GM10248 (cell line): ENCODE measurements at regions of chr10 and their contacts with region 1.

Region 1: GRCh38 chr10:110137142-110137545 is 70.3 kb upstream of the MXI1 start:
- DNase-seq: peak; percentile 56
- CTCF ChIP-seq: peak; percentile 56

Region 2: GRCh38 chr10:110163192-110163773 is 26.1 kb after region 1 on chr10:
- CTCF ChIA-PET with region 1: interaction called, 20 read pairs
- POLR2A ChIA-PET with region 1: no interaction called
- DNase-seq: no peak
- CTCF ChIP-seq: no peak

Region 3: GRCh38 chr10:110225756-110226542 is 88.8 kb after region 1 on chr10:
- CTCF ChIA-PET with region 1: interaction called, 15 read pairs
- POLR2A ChIA-PET with region 1: no interaction called
- DNase-seq: peak; percentile 88
- CTCF ChIP-seq: peak; percentile 83

Region 4: DNA sequence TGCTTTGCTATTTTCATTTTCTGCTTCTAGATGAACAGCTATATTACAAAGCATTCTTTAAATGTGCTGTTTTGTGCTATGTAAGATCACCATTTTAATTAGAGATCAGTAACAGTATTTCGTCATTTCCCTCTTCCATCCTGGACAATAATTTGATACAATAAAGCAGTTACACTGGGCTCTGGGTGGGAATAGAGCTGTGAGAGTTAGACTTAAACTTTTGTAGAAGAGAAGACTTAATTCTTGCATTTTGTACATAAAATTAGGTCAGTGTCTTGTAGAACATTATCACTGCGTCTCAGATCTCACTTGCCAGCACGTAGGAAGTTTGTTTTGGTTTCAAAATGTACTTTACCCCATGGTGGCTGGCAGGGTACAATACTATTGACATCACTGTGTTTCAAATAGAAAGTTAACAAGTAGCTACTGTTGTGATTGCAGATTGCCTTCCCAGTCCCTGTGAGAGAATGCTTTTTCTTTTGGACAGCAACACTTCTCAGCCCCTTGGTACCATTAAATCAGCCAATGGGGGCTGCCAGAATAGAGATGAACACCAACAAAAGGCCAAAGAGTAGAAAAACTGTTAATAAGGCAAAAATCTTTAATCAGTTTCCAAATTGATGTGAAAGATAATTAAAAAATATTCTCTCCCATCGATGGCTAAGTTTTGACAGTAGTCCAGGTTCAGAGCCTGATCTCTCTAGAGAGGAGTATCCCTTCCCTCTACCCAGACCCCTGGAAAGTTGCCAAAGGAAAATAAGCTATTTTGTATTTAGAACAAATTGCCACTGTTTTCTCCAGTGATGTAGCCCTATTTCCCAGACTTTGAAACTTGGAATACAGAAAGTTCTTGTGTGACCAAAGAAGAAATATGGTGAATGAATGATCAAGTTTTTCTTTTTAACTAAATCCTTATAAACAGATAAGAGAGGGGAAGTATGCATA is 132.5 kb after region 1 on chr10:
- CTCF ChIA-PET with region 1: interaction called, 22 read pairs
- POLR2A ChIA-PET with region 1: no interaction called
- DNase-seq: no peak
- CTCF ChIP-seq: no peak

Region 5: GRCh38 chr10:110336111-110336721 is 199.1 kb after region 1 on chr10:
- CTCF ChIA-PET with region 1: no interaction called
- POLR2A ChIA-PET with region 1: no interaction called
- DNase-seq: no peak
- CTCF ChIP-seq: no peak